ENCODE measurements at regions of chr14 and their contacts with region 1.

Region 1: DNA sequence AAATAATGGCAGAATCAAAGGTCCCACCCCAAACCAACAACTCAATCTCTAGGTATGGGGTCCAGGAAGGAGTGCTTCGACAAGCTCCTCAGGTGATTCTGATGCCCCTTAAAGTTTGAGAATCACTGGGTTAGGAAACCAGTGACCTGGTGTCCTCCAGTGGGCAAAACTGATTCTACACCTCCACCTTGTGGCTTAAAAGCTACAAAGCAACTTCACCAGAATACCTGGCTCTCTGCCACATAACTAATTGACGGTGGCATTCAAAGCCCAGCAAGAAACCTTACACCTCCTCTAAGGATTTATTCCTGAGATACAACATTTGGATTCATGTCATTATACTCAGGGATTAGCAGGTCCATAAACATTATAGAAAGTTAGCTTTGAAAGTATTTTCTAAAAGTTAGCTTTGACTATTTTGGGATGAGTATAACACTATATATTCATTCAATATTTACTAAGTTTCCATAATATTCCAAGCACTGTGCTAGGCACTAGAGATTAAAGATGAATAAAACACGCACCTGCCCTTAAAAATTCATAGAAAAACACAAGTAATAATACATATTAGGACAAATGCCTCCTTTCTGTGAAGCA is 45.4 kb downstream of the DCAF5 start:
- DNase-seq: no peak
- H3K4me3 ChIP-seq: no peak overlapping the region
- H3K27ac ChIP-seq: peak overlapping the region in 1 of 2 donors; percentile 16
- H3K4me1 ChIP-seq: peaks cover 0 to 5% (median 0%) of the 10 kb centered on the region in 4 donors
- H3K27me3 ChIP-seq: no peaks in the 10 kb centered on the region
- CTCF ChIP-seq: peak; percentile 56 to 81

Region 2: DNA sequence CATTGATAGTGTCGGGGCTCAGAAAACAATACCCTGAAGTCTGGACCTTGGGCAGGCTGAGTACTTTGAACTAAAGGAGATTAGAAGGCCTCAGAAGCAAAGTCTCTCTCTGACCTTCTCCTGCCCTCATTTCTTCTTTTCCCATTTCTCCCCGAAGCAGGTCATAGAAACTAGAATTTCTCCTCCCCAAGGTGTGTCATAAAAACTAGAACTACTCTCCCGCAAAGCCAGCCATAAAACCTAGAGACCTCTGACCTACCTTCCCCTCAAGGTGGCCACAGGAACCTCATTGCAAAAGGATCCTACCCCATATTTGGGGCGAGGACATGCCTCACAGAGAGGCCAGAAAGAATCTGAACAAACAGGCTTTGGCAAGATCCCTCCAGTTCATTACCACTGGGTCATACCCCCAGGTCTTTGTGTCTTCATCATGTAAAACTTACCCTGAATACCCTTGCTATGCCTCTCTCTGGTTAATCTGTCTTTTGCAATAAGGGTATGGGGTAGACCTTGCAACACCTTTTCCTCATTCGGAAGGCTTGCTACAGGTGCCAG is 249.9 kb before region 1 on chr14:
- intact Hi-C with region 1: loop called (anchors 2 kb)
- DNase-seq: no peak
- H3K4me3 ChIP-seq: no peak overlapping the region
- H3K27ac ChIP-seq: no peak overlapping the region
- H3K4me1 ChIP-seq: no peaks in the 10 kb centered on the region
- H3K27me3 ChIP-seq: no peaks in the 10 kb centered on the region
- CTCF ChIP-seq: no peak

Region 3: GRCh38 chr14:69226178-69226577 is 118.7 kb after region 1 on chr14:
- intact Hi-C with region 1: no loop called
- DNase-seq: no peak
- H3K4me3 ChIP-seq: no peak overlapping the region
- H3K27ac ChIP-seq: no peak overlapping the region
- H3K4me1 ChIP-seq: no peaks in the 10 kb centered on the region
- H3K27me3 ChIP-seq: no peaks in the 10 kb centered on the region
- CTCF ChIP-seq: no peak

Measured in tibial artery (tissue), 4 donors.